HepG2 (cell line): ENCODE measurements at regions of chr11 and their contacts with region 1.

Region 1: DNA sequence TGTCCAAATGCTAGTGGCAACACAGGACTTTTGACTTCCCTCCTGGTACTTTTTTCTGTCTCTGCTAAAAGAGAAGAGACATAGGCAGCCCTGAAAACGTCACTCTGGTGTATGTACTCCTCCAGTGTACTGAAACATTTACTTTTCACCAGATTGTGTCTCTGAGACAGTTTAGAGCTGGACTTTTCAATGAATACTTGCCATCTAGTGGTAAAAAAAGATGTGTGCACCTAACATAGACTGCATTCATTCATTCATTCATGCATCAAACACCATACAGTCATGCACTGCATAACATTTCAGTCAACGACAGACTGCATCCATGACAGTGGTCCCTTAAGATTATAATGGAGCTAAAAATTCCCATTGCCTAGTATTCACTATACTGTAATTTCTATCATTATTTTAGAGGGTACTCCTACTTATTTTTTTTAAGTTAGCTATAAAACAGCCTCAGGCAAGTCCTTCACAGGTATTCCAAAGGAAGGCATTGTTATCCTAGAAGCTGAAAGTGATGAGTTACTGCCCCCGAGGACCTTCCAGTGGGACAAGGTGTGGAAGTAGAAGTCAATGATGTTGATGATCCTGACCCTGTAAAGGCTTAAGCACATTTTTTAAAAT is 186.2 kb downstream of the SPON1 start:
- DNase-seq: peak; percentile 16
- ATAC-seq: peak; percentile 83
- H3K4me3 ChIP-seq: no peak overlapping the region
- H3K27ac ChIP-seq: no peak overlapping the region
- H3K4me1 ChIP-seq: no peaks in the 10 kb centered on the region
- H3K27me3 ChIP-seq: no peaks in the 10 kb centered on the region
- CTCF ChIP-seq: peak; percentile 44
- EP300 ChIP-seq: no peak
- POLR2A ChIP-seq: no peak
- RAD21 ChIP-seq: no peak

Region 2: DNA sequence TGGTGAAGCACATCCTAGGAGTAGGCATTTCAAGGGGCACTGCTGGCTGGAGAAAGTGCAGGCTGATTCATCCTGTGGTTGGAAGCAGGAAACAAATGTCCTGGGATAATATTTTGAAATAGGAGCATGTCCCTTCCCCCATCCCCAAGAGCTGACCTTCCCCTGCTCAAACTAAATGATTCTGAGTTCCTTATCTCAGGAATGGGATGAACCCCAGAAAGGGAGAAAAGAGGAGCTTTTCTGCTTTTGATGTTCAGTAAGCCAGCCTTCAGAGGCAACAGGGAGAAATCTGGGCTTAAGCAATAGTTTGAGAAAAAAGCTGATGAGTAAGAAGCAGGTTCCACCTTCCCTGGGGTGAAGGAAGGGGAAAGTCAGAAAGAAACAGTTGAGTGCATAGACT is 205.8 kb before region 1 on chr11:
- CTCF ChIA-PET with region 1: no interaction called
- POLR2A ChIA-PET with region 1: no interaction called
- in situ Hi-C with region 1: no loop called
- intact Hi-C with region 1: no loop called
- DNase-seq: no peak
- ATAC-seq: no peak
- H3K4me3 ChIP-seq: no peak overlapping the region
- H3K27ac ChIP-seq: no peak overlapping the region
- H3K4me1 ChIP-seq: no peaks in the 10 kb centered on the region
- H3K27me3 ChIP-seq: no peaks in the 10 kb centered on the region
- CTCF ChIP-seq: no peak
- EP300 ChIP-seq: no peak
- POLR2A ChIP-seq: no peak
- RAD21 ChIP-seq: no peak

Region 3: DNA sequence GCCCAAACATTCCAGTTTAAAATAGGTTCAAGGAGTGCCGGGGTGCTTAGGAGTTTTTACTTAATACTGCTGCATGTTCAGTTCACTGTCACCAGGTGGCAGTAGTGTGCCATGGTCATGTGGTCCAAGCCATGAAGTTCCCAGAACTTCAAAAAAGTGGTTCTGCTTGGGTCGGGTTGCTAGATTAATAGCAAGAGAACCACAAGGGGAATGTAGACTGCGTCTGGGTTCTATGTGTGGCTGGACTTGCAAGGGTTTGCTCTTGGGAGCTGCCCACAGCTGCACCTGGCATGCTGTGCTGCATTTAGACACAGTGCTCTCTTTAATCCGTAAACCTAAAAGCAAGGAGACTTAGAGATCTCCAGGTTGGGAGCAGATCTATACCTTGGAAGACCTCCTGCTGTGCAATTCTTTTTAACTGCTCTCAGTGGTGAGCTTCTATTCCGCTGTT is 192.8 kb before region 1 on chr11:
- CTCF ChIA-PET with region 1: interaction called, 13 read pairs
- POLR2A ChIA-PET with region 1: no interaction called
- in situ Hi-C with region 1: loop called (anchors 10 kb)
- intact Hi-C with region 1: loop called (anchors 1 kb)
- DNase-seq: peak; percentile 58
- ATAC-seq: peak; percentile 72
- H3K4me3 ChIP-seq: no peak overlapping the region
- H3K27ac ChIP-seq: no peak overlapping the region
- H3K4me1 ChIP-seq: no peaks in the 10 kb centered on the region
- H3K27me3 ChIP-seq: peaks cover 0 to 22% of the 10 kb centered on the region in 2 experiments; a peak in 3 of 5 replicates
- CTCF ChIP-seq: peak; percentile 84
- EP300 ChIP-seq: no peak
- POLR2A ChIP-seq: no peak
- RAD21 ChIP-seq: peak; percentile 59

Region 4: DNA sequence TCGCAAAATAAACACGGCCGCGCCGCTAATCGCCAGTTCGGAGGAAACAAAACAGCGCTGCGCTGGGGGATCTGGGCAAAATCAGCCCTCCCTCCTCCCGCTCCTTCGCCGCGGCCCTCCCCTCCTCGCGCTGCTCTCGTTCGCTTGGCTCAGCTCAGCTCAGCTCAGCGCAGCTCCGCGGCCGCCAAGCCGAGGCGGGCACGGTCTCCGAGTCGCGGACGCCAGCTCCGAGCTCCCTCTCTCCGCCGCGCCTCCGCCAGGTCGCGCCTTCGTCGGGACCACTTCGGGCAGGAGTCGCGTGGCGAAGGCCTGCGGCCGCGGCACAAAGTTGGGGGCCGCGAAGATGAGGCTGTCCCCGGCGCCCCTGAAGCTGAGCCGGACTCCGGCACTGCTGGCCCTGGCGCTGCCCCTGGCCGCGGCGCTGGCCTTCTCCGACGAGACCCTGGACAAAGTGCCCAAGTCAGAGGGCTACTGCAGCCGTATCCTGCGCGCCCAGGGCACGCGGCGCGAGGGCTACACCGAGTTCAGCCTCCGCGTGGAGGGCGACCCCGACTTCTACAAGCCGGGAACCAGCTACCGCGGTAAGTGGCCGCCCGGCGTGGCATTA is 186.1 kb before region 1 on chr11 and contains the start of gene SPON1:
- CTCF ChIA-PET with region 1: interaction called, 3 read pairs
- POLR2A ChIA-PET with region 1: no interaction called
- in situ Hi-C with region 1: loop called (anchors 10 kb)
- intact Hi-C with region 1: no loop called
- DNase-seq: no peak
- ATAC-seq: no peak
- H3K4me3 ChIP-seq: no peak within 1 kb of the TSS
- H3K27ac ChIP-seq: no peak within 1 kb of the TSS
- H3K4me1 ChIP-seq: peaks cover 11% of the 10 kb centered on the region
- H3K27me3 ChIP-seq: peaks cover 2 to 27% of the 10 kb centered on the region in 2 experiments
- CTCF ChIP-seq: no peak
- EP300 ChIP-seq: no peak
- POLR2A ChIP-seq: no peak
- RAD21 ChIP-seq: no peak
- total RNA-seq, gene SPON1: not detected in 2 replicates

Region 5: DNA sequence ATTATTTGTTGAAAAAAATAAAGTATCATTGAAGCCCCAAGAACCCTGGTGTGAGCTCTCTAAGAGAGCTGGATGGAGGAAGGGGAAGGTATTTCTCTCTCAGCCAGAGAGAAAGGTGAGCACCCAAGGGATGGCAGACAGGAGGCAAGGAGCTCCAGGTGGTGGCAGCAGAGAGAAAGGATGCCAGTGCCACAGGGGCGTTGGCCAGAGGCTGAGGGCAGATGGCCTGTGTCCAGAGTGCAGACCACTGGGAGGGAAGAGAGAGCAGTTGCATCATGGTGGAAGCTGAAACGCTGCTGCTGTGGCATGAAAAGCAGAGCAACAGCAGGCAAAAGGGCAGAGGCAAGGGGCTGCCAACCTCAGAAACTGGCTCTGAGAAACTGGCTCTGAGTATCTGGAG is 177.8 kb before region 1 on chr11:
- CTCF ChIA-PET with region 1: no interaction called
- POLR2A ChIA-PET with region 1: no interaction called
- in situ Hi-C with region 1: loop called (anchors 10 kb)
- intact Hi-C with region 1: loop called (anchors 5 kb)
- DNase-seq: peak; percentile 30
- ATAC-seq: peak; percentile 94
- H3K4me3 ChIP-seq: no peak overlapping the region
- H3K27ac ChIP-seq: no peak overlapping the region
- H3K4me1 ChIP-seq: peaks cover under 1% of the 10 kb centered on the region; the same call in 1 of the 2 replicates
- H3K27me3 ChIP-seq: no peaks in the 10 kb centered on the region
- CTCF ChIP-seq: peak; percentile 56
- EP300 ChIP-seq: no peak
- POLR2A ChIP-seq: no peak
- RAD21 ChIP-seq: 0 out of 2 replicates have a peak, but pooled peaks have one; percentile 23